B cell (primary cell): ENCODE measurements at regions of chr11 and their contacts with region 1.

Region 1: GRCh38 chr11:10857709-10858438 is at the start of gene ZBED5:
- DNase-seq: peak; percentile 98
- ATAC-seq: peak; percentile 87
- H3K4me3 ChIP-seq: peak within 1 kb of the TSS; percentile 68 to 98 (median 95)
- H3K4me3 Mint-ChIP-seq: peak within 1 kb of the TSS; percentile 98
- H3K27ac ChIP-seq: peak within 1 kb of the TSS; percentile 90 to 98
- H3K27ac Mint-ChIP-seq: peak within 1 kb of the TSS; percentile 99
- H3K4me1 ChIP-seq: peaks cover 21 to 23% of the 10 kb centered on the region in 2 donors
- H3K4me1 Mint-ChIP-seq: peaks cover 40% of the 10 kb centered on the region
- H3K27me3 ChIP-seq: no peaks in the 10 kb centered on the region
- H3K27me3 Mint-ChIP-seq: no peaks in the 10 kb centered on the region
- CTCF ChIP-seq: no peak
- total RNA-seq, gene ZBED5: 168 and 178 TPM in 2 replicates

Region 2: DNA sequence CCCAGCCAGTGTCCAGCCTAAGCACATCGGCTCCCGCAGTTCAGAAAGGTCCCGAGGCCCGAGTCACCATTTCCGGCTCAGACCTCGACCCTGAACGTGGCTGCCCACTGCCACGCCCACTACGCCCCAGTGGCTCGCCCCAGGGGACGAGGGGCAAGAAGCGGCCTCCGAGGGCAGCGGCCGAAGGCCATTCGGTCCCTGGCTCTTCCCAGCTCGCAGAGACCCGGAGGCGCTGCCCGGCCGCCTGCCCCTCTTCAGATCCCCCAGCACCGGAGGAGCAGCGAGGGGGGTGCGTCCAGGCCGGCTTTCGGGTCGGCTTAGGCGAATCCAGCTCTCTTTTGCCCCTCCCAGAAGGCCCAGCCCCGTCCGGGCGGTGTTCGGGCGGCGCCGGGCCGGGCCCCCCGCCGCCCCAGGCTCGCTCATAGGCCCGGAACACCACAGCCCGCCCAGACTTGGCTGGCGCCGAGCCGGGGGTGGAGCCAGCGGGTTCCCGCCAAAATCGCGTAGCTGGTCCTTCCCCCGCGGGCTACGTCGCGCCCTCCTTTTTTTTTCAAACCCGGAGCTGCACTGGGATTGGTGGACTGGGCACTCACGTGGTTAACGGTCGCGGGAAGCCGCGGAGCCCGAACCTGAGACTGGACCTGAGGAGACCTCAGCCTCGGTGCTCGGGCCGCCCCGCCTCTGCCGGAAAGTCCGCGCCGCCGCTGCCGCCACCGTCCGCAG is 1284.7 kb before region 1 on chr11 and contains the start of gene WEE1:
- CTCF ChIA-PET with region 1: no interaction called
- POLR2A ChIA-PET with region 1: no interaction called
- intact Hi-C with region 1: loop called (anchors 5 kb)
- DNase-seq: peak; percentile 97
- ATAC-seq: peak; percentile 87
- H3K4me3 ChIP-seq: peak within 1 kb of the TSS; percentile 52 to 96 (median 90)
- H3K4me3 Mint-ChIP-seq: peak within 1 kb of the TSS; percentile 97
- H3K27ac ChIP-seq: peak within 1 kb of the TSS; percentile 83 to 89
- H3K27ac Mint-ChIP-seq: peak within 1 kb of the TSS; percentile 94
- H3K4me1 ChIP-seq: peaks cover 51 to 55% of the 10 kb centered on the region in 2 donors
- H3K4me1 Mint-ChIP-seq: peaks cover 64% of the 10 kb centered on the region
- H3K27me3 ChIP-seq: no peaks in the 10 kb centered on the region
- H3K27me3 Mint-ChIP-seq: no peaks in the 10 kb centered on the region
- CTCF ChIP-seq: no peak
- total RNA-seq, gene WEE1: 31.2 and 31.3 TPM in 2 replicates

Region 3: GRCh38 chr11:10792398-10792975 is 65.4 kb before region 1 on chr11:
- CTCF ChIA-PET with region 1: interaction called, 12 read pairs
- POLR2A ChIA-PET with region 1: interaction called, 3 read pairs
- intact Hi-C with region 1: no loop called
- DNase-seq: peak; percentile 86
- ATAC-seq: peak; percentile 97
- H3K4me3 ChIP-seq: peak overlapping the region in 2 of 5 experiments; percentile 17 to 32
- H3K4me3 Mint-ChIP-seq: peak overlapping the region; percentile 17
- H3K27ac ChIP-seq: no peak overlapping the region
- H3K27ac Mint-ChIP-seq: no peak overlapping the region
- H3K4me1 ChIP-seq: peaks cover 13 to 20% of the 10 kb centered on the region in 2 donors
- H3K4me1 Mint-ChIP-seq: peaks cover 21% of the 10 kb centered on the region
- H3K27me3 ChIP-seq: no peaks in the 10 kb centered on the region
- H3K27me3 Mint-ChIP-seq: no peaks in the 10 kb centered on the region
- CTCF ChIP-seq: peak; percentile 90

Region 4: GRCh38 chr11:10824888-10825287 is 33.0 kb before region 1 on chr11:
- CTCF ChIA-PET with region 1: interaction called, 4 read pairs
- POLR2A ChIA-PET with region 1: interaction called, 14 read pairs
- intact Hi-C with region 1: loop called (anchors 2 kb)
- DNase-seq: peak; percentile 74
- ATAC-seq: peak; percentile 97
- H3K4me3 ChIP-seq: peak overlapping the region in 1 of 5 experiments; percentile 20
- H3K4me3 Mint-ChIP-seq: peak overlapping the region; percentile 70
- H3K27ac ChIP-seq: peak overlapping the region; percentile 49 to 71
- H3K27ac Mint-ChIP-seq: peak overlapping the region; percentile 89
- H3K4me1 ChIP-seq: peaks cover 21 to 24% of the 10 kb centered on the region in 2 donors
- H3K4me1 Mint-ChIP-seq: peaks cover 24% of the 10 kb centered on the region
- H3K27me3 ChIP-seq: no peaks in the 10 kb centered on the region
- H3K27me3 Mint-ChIP-seq: no peaks in the 10 kb centered on the region
- CTCF ChIP-seq: no peak

Region 5: DNA sequence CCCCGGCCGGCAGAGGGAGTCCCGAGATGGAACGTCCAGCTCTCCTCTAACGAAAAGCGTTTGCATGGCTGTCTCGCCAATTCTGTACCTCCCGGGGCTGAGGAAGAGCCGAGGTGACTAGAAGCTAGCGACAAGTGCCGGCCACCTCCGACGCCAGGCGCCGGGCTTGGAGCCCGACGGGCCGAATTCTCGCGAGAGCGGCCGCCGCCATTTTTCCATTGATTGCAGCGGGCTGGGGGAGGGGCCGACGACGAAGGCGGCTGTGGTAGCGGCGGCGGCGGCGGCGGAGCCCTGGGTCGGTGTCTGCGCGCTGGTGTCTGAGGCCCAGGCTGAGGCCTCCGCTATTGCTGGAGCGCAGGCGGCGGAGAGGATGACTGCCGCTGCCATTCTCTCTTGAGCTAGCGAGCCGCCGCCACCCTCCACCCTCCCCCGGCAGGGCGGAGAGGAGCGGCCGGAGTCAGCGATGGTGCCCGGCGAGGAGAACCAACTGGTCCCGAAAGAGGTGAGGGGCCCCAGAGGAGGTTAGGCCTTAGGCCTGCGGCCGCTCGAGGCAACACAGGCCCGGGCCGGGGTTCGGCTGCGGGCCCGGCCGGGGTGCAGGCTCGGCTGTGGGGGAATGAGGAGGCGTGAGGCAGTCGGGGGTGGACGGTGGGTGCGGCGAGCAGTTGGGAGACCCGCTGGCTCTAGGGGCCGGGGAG is 984.0 kb after region 1 on chr11 and contains the start of gene USP47:
- CTCF ChIA-PET with region 1: no interaction called
- POLR2A ChIA-PET with region 1: no interaction called
- intact Hi-C with region 1: loop called (anchors 2 kb)
- DNase-seq: peak; percentile 96
- ATAC-seq: peak; percentile 81
- H3K4me3 ChIP-seq: peak within 1 kb of the TSS; percentile 85 to 95 (median 92)
- H3K4me3 Mint-ChIP-seq: no peak within 1 kb of the TSS
- H3K27ac ChIP-seq: peak within 1 kb of the TSS; percentile 87 to 98
- H3K27ac Mint-ChIP-seq: no peak within 1 kb of the TSS
- H3K4me1 ChIP-seq: peaks cover 31 to 43% of the 10 kb centered on the region in 2 donors
- H3K4me1 Mint-ChIP-seq: peaks cover 28% of the 10 kb centered on the region
- H3K27me3 ChIP-seq: peaks cover 0 to 6% (median 2%) of the 10 kb centered on the region in 4 experiments
- H3K27me3 Mint-ChIP-seq: peaks cover 9% of the 10 kb centered on the region
- CTCF ChIP-seq: peak; percentile 40
- total RNA-seq, gene USP47: 52.9 and 61.1 TPM in 2 replicates